Left ventricle myocardium inferior (tissue), 1 donor: ENCODE measurements at regions of chr3 and their contacts with region 1.

Region 1: DNA sequence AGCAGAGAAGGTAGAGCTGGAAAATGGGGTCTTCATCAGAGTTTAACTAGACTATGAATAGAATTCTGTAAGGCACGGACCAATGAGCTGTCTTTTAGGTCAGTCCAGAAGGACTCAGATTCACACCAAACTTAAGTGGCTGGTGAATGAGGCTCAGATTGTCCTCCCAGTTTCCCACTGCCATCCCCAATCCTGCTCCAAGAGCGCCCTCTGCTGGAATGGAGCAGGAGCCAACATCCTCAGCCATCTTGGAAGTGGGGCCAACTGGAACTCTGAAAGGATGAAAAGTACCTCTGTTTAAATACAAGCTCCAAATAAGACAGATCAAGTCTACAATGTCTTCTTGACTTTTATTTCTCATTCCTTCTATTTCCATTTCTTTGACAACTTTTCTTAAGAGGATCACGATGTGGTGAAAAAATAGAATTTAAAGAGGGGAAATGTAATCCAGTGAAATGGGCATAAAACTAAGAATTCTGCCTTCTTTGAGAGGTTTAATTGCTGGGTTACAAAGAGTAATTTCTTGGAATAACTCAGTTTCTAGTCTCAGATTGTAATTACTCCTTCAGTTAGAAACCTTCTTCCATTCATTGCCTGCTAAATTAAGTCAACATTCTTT is 217.1 kb upstream of the TPRG1 start:
- DNase-seq: peak; percentile 81
- H3K4me3 ChIP-seq: no peak overlapping the region
- H3K27ac ChIP-seq: peak overlapping the region; percentile 74
- H3K4me1 ChIP-seq: peaks cover 43% of the 10 kb centered on the region
- H3K27me3 ChIP-seq: no peaks in the 10 kb centered on the region
- CTCF ChIP-seq: peak; percentile 95

Region 2: GRCh38 chr3:188154014-188154808 is 800.5 kb before region 1 on chr3 and contains the start of gene LPP:
- intact Hi-C with region 1: loop called (anchors 10 kb)
- DNase-seq: peak; percentile 82
- H3K4me3 ChIP-seq: peak within 1 kb of the TSS; percentile 97
- H3K27ac ChIP-seq: peak within 1 kb of the TSS; percentile 98
- H3K4me1 ChIP-seq: peaks cover 77% of the 10 kb centered on the region
- H3K27me3 ChIP-seq: no peaks in the 10 kb centered on the region
- CTCF ChIP-seq: peak; percentile 9
- total RNA-seq, gene LPP: 97.4 TPM

Region 3: GRCh38 chr3:189148081-189148507 is 193.4 kb after region 1 on chr3:
- intact Hi-C with region 1: loop called (anchors 10 kb)
- DNase-seq: peak; percentile 40
- H3K4me3 ChIP-seq: no peak overlapping the region
- H3K27ac ChIP-seq: peak overlapping the region; percentile 24
- H3K4me1 ChIP-seq: peaks cover 11% of the 10 kb centered on the region
- H3K27me3 ChIP-seq: no peaks in the 10 kb centered on the region
- CTCF ChIP-seq: peak; percentile 80